Tibial artery (tissue), 4 donors: ENCODE measurements at regions of chr17 and their contacts with region 1.

Region 1: DNA sequence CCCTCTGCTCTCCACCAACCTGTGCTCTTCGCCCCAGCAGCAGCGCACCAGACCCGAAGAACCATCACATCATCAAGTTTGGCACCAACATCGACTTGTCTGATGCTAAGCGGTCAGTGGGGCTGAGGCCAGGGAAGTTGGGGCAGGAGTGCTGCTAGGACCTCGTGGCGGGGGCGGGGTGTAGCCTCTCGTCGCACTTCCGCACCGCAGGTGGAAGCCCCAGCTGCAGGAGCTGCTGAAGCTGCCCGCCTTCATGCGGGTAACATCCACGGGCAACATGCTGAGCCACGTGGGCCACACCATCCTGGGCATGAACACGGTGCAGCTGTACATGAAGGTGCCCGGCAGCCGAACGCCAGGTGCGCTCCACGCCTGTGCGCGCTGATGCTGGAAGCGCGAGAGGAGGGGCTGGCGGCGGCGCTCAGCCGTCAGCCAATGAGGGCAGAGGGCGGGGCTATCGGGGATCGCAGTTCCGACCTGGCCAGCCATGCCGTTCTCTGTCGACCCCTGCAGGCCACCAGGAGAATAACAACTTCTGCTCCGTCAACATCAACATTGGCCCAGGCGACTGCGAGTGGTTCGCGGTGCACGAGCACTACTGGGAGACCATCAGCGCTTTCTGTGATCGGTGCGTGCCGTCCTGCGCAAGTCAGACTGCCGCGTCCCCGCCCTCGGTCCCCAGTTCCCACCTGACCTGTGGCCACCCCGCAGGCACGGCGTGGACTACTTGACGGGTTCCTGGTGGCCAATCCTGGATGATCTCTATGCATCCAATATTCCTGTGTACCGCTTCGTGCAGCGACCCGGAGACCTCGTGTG is 3.2 kb upstream of the TMEM88 start:
- DNase-seq: peak; percentile 79 to 93
- H3K4me3 ChIP-seq: no peak overlapping the region
- H3K27ac ChIP-seq: no peak overlapping the region
- H3K4me1 ChIP-seq: peaks cover 0 to 31% (median 27%) of the 10 kb centered on the region in 4 donors
- H3K27me3 ChIP-seq: no peaks in the 10 kb centered on the region
- CTCF ChIP-seq: peak; percentile 98 to 99

Region 2: GRCh38 chr17:7823581-7824397 is 27.9 kb before region 1 on chr17:
- intact Hi-C with region 1: loop called (anchors 2 kb)
- DNase-seq: no peak
- H3K4me3 ChIP-seq: no peak overlapping the region
- H3K27ac ChIP-seq: no peak overlapping the region
- H3K4me1 ChIP-seq: peaks cover 0 to 6% (median 2%) of the 10 kb centered on the region in 4 donors
- H3K27me3 ChIP-seq: peaks cover 0 to 37% of the 10 kb centered on the region in 2 donors
- CTCF ChIP-seq: no peak